ENCODE measurements at regions of chr2 and their contacts with region 1.

Region 1: DNA sequence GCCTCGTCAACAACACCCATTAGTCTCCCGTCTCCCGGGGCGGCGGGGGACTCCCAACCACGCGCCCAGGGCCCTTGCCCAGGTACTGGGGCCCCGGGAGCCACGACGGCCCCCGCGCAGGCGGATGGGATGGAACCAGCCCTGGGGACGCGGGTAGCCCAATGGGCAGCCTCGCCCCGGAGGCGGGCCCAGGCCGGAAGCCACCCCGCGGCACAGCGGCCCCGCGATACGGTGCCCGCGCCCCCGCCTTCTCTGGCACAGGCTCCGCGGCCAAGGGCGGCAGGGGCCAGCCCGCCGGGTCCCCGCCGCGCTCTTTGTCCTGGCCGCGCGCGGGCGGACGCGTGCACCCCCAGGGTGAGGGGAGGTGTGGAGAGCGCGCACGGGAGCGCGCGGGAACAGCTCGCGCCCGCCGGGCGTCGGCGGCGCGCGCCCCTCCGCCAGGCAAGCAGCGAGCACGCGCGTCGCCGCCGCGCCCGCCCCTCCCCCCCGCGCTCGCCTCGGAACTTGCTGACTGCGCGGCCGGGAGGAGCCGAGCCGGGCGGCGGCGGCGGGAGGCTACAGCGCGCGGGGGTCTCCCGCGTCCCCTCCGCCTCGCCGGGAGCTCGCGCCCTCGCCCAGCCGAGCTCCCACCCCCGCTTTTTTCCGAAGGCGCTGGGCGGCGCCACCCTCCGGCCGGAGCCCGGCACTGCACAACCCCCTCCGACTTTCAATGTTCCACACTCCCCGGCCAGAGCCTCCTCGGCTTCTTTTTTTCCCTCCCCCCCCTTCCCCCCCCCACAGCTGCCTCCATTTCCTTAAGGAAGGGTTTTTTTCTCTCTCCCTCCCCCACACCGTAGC is at the start of gene UBE2E3:
- DNase-seq: peak; percentile 74 to 85 (median 79)
- ATAC-seq: peak; percentile 87
- H3K4me3 ChIP-seq: peak within 1 kb of the TSS; percentile 67
- H3K4me3 Mint-ChIP-seq: peak within 1 kb of the TSS; percentile 91 to 99 (median 96)
- H3K27ac ChIP-seq: peak within 1 kb of the TSS; percentile 62
- H3K27ac Mint-ChIP-seq: peak within 1 kb of the TSS; percentile 94 to 98 (median 98)
- H3K4me1 ChIP-seq: peaks cover 20 to 26% of the 10 kb centered on the region in 2 donors
- H3K4me1 Mint-ChIP-seq: peaks cover 25 to 51% (median 44%) of the 10 kb centered on the region in 7 donors
- H3K27me3 ChIP-seq: no peaks in the 10 kb centered on the region
- H3K27me3 Mint-ChIP-seq: peaks cover 0 to 46% (median 0%) of the 10 kb centered on the region in 5 donors
- total RNA-seq, gene UBE2E3: 21.7 to 33.4 (median 24.3) TPM

Region 2: DNA sequence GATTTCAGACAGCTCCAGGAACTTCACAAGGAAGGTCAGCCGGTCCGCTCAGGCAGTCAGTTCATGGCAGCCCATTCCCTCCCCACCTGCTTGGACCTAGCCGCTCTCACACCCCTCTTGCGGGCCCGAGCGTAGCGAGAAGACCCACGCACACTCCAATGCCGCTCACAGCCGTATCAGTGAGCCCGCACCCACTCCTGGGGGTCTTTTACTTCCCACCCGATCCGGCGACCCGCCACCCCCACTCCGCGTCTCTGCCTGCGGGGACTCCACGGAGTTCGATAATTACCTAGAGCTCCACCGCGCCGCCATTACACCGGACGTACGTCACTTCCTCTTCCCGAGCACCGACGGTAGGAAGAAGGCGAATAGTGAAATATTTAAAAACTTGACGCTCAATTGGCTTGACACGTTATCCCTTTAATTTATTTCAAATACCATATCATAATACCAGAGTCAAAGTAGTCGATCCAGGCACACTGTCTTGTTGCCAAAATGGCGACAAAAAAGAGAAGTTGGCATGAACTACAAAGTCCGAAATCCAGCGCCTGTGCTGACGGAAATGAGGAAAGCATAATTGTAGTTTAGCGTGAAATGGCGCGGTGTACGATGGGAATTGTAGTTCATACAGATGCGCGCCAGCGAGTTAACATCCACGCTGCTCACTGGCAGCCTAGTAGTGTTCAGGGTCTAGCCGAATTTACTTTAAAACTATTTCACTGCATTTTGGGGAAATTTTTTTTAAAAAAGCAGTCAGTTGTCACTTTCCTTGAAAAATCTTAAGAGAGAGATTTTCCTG is 973.3 kb before region 1 on chr2 and contains the start of gene CWC22:
- CTCF ChIA-PET with region 1: no interaction called
- POLR2A ChIA-PET with region 1: interaction called, 3 read pairs
- intact Hi-C with region 1: loop called (anchors 1 to 5 kb)
- DNase-seq: peak; percentile 73 to 93 (median 89)
- ATAC-seq: peak; percentile 96
- H3K4me3 ChIP-seq: peak within 1 kb of the TSS; percentile 96
- H3K4me3 Mint-ChIP-seq: peak within 1 kb of the TSS; percentile 92 to 100 (median 96)
- H3K27ac ChIP-seq: peak within 1 kb of the TSS; percentile 93
- H3K27ac Mint-ChIP-seq: peak within 1 kb of the TSS; percentile 98 to 100 (median 99)
- H3K4me1 ChIP-seq: peaks cover 8 to 11% of the 10 kb centered on the region in 2 donors
- H3K4me1 Mint-ChIP-seq: peaks cover 19 to 54% (median 49%) of the 10 kb centered on the region in 7 donors
- H3K27me3 ChIP-seq: no peaks in the 10 kb centered on the region
- H3K27me3 Mint-ChIP-seq: peaks cover 0 to 3% (median 0%) of the 10 kb centered on the region in 5 donors
- total RNA-seq, gene CWC22: 14.4 to 32.0 (median 23.5) TPM

Region 3: GRCh38 chr2:181036848-181037603 is 56.7 kb after region 1 on chr2:
- CTCF ChIA-PET with region 1: no interaction called
- POLR2A ChIA-PET with region 1: no interaction called
- intact Hi-C with region 1: loop called in 1 of 2 experiments (anchors 2 kb)
- DNase-seq: no peak
- ATAC-seq: no peak
- H3K4me3 ChIP-seq: no peak overlapping the region
- H3K4me3 Mint-ChIP-seq: peak overlapping the region in 1 of 10 donors; percentile 43
- H3K27ac ChIP-seq: no peak overlapping the region
- H3K27ac Mint-ChIP-seq: peak overlapping the region in 1 of 9 donors; percentile 69
- H3K4me1 ChIP-seq: no peaks in the 10 kb centered on the region
- H3K4me1 Mint-ChIP-seq: peaks cover 12 to 33% (median 19%) of the 10 kb centered on the region in 7 donors
- H3K27me3 ChIP-seq: no peaks in the 10 kb centered on the region
- H3K27me3 Mint-ChIP-seq: no peaks in the 10 kb centered on the region

Region 4: GRCh38 chr2:181140414-181140813 is 160.1 kb after region 1 on chr2:
- CTCF ChIA-PET with region 1: no interaction called
- POLR2A ChIA-PET with region 1: interaction called, 4 read pairs
- intact Hi-C with region 1: loop called in 1 of 2 experiments (anchors 5 kb)
- DNase-seq: peak in 1 of 9 donors; percentile 29
- ATAC-seq: peak; percentile 30
- H3K4me3 ChIP-seq: peak overlapping the region; percentile 20
- H3K4me3 Mint-ChIP-seq: peak overlapping the region; percentile 31 to 94 (median 86)
- H3K27ac ChIP-seq: peak overlapping the region; percentile 78
- H3K27ac Mint-ChIP-seq: peak overlapping the region; percentile 93 to 100 (median 98)
- H3K4me1 ChIP-seq: peaks cover 46 to 66% of the 10 kb centered on the region in 2 donors
- H3K4me1 Mint-ChIP-seq: peaks cover 33 to 83% (median 75%) of the 10 kb centered on the region in 7 donors
- H3K27me3 ChIP-seq: no peaks in the 10 kb centered on the region
- H3K27me3 Mint-ChIP-seq: no peaks in the 10 kb centered on the region

Region 5: DNA sequence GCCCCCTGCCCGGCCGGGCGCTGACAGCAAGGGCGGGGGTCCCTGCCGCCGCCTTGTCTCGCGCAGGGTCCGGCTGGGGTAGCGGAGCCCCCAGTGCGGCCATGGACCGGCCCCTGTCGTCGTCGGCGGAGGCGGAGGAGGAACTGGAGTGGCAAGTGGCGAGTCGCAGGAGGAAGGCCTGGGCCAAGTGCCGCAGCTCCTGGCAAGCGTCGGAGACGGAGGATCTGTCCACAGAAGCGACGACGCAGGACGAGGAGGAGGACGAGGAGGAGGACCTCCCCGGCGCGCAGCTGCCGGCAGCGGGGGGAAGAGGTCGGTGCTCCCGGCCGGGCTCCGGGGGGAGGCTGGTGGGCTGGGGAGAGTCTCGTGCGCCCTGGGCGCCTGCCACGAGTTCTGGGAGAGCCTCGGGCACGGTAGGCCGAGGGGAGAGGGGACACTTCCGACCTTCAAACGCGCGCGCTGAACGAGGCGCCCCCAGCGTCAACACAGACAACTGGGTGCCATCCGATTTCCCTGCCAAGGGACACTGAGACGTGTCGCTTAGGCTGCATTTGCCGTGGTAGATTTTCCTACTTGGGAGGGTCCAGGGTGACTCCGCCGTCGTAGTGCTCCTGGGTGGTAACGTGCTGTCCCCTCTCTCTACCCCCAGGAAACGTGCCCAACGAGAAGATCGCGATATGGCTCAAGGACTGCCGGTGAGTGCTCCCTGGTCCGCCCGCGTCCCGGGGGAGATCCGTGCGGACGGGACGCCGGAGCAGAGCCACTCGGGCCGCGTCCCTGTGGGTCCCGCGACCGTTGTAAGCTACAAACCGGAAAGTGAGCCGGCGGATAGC is 911.9 kb after region 1 on chr2:
- CTCF ChIA-PET with region 1: no interaction called
- POLR2A ChIA-PET with region 1: no interaction called
- intact Hi-C with region 1: loop called (anchors 1 to 2 kb)
- DNase-seq: peak; percentile 37 to 68 (median 65)
- ATAC-seq: peak; percentile 66
- H3K4me3 ChIP-seq: peak overlapping the region; percentile 85
- H3K4me3 Mint-ChIP-seq: peak overlapping the region; percentile 90 to 99 (median 97)
- H3K27ac ChIP-seq: peak overlapping the region; percentile 76
- H3K27ac Mint-ChIP-seq: peak overlapping the region; percentile 74 to 93 (median 89)
- H3K4me1 ChIP-seq: peaks cover 4 to 22% of the 10 kb centered on the region in 2 donors
- H3K4me1 Mint-ChIP-seq: peaks cover 25 to 49% (median 44%) of the 10 kb centered on the region in 7 donors
- H3K27me3 ChIP-seq: no peaks in the 10 kb centered on the region
- H3K27me3 Mint-ChIP-seq: peaks cover 11 to 35% (median 20%) of the 10 kb centered on the region in 5 donors

Measured in naive thymus-derived CD4-positive, alpha-beta T cell (primary cell).